Natural killer cell (primary cell): ENCODE measurements at regions of chr12 and their contacts with region 1.

Region 1: GRCh38 chr12:10364815-10365622 is 24.8 kb downstream of the KLRK1 start:
- DNase-seq: peak; percentile 51 to 90
- ATAC-seq: peak; percentile 74 to 83 (median 80)
- H3K4me3 ChIP-seq: peak overlapping the region; percentile 70
- H3K4me3 Mint-ChIP-seq: no peak overlapping the region
- H3K27ac ChIP-seq: peak overlapping the region; percentile 83
- H3K27ac Mint-ChIP-seq: no peak overlapping the region
- H3K4me1 ChIP-seq: peaks cover 63% of the 10 kb centered on the region
- H3K4me1 Mint-ChIP-seq: peaks cover 23 to 40% of the 10 kb centered on the region in 2 donors
- H3K27me3 ChIP-seq: no peaks in the 10 kb centered on the region
- H3K27me3 Mint-ChIP-seq: no peaks in the 10 kb centered on the region
- CTCF ChIP-seq: no peak

Region 2: GRCh38 chr12:10385166-10385613 is 20.2 kb after region 1 on chr12:
- intact Hi-C with region 1: loop called (anchors 2 kb)
- DNase-seq: no peak
- ATAC-seq: peak; percentile 53 to 60 (median 60)
- H3K4me3 ChIP-seq: peak overlapping the region; percentile 92
- H3K4me3 Mint-ChIP-seq: peak overlapping the region; percentile 86
- H3K27ac ChIP-seq: peak overlapping the region; percentile 86
- H3K27ac Mint-ChIP-seq: peak overlapping the region; percentile 89 to 91
- H3K4me1 ChIP-seq: peaks cover 16% of the 10 kb centered on the region
- H3K4me1 Mint-ChIP-seq: peaks cover 66 to 77% of the 10 kb centered on the region in 2 donors
- H3K27me3 ChIP-seq: no peaks in the 10 kb centered on the region
- H3K27me3 Mint-ChIP-seq: no peaks in the 10 kb centered on the region
- CTCF ChIP-seq: no peak

Region 3: GRCh38 chr12:10395390-10395998 is 30.5 kb after region 1 on chr12:
- intact Hi-C with region 1: loop called (anchors 2 kb)
- DNase-seq: peak in 1 of 2 donors; percentile 75
- ATAC-seq: peak; percentile 52 to 82 (median 75)
- H3K4me3 ChIP-seq: peak overlapping the region; percentile 5
- H3K4me3 Mint-ChIP-seq: peak overlapping the region; percentile 87
- H3K27ac ChIP-seq: peak overlapping the region; percentile 92
- H3K27ac Mint-ChIP-seq: peak overlapping the region; percentile 97 to 98
- H3K4me1 ChIP-seq: peaks cover 42% of the 10 kb centered on the region
- H3K4me1 Mint-ChIP-seq: peaks cover 63 to 68% of the 10 kb centered on the region in 2 donors
- H3K27me3 ChIP-seq: no peaks in the 10 kb centered on the region
- H3K27me3 Mint-ChIP-seq: no peaks in the 10 kb centered on the region
- CTCF ChIP-seq: no peak

Region 4: DNA sequence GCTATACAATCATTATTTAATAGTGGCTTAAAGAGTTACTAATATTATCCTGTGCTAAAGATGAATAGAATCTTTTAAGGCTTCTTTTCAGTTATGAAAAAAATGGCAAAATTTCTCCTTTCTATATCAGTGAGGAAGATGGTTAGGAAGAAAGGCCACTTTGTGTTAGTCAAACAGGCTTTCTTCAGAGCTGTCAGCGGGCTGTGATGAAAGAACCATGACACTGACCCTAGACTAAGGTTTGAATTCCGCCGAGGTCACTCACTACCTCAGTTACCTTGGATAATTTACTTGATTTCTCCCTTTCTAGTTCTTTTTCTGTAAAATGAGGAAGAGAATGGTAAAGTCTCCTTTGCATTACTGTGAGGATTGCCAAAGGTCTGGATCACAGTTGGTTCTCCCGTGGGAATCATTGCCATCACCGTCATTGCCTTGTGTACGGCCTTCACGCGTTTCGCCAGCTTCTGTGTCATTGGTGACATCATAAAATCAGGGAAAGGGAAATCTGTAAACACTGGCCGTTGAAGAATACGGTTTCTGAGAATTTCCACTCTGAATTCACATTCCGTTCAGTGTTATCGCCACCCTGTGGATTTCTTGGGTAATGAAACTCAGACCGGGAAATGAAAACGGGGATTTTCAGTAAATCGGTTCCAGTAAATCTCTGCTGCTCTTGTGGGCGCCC is 384.8 kb after region 1 on chr12:
- intact Hi-C with region 1: loop called (anchors 5 kb)
- DNase-seq: peak; percentile 42 to 87
- ATAC-seq: peak; percentile 89 to 99 (median 98)
- H3K4me3 ChIP-seq: no peak overlapping the region
- H3K4me3 Mint-ChIP-seq: no peak overlapping the region
- H3K27ac ChIP-seq: no peak overlapping the region
- H3K27ac Mint-ChIP-seq: peak overlapping the region in 1 of 2 donors; percentile 21
- H3K4me1 ChIP-seq: peaks cover 4% of the 10 kb centered on the region
- H3K4me1 Mint-ChIP-seq: peaks cover 6 to 11% of the 10 kb centered on the region in 2 donors
- H3K27me3 ChIP-seq: peaks cover 5% of the 10 kb centered on the region
- H3K27me3 Mint-ChIP-seq: peaks cover 30 to 56% of the 10 kb centered on the region in 2 donors
- CTCF ChIP-seq: peak; percentile 78